ENCODE measurements at regions of chr13 and their contacts with region 1.

Region 1: GRCh38 chr13:40371531-40372125 is 294.8 kb downstream of the FOXO1 start:
- DNase-seq: no peak
- H3K4me3 Mint-ChIP-seq: peak overlapping the region; percentile 1
- H3K27ac Mint-ChIP-seq: peak overlapping the region; percentile 67
- H3K4me1 Mint-ChIP-seq: peaks cover 46% of the 10 kb centered on the region
- H3K27me3 Mint-ChIP-seq: no peaks in the 10 kb centered on the region

Region 2: GRCh38 chr13:40221460-40222201 is 150.0 kb before region 1 on chr13:
- intact Hi-C with region 1: loop called (anchors 2 kb)
- DNase-seq: no peak
- H3K4me3 Mint-ChIP-seq: peak overlapping the region; percentile 37
- H3K27ac Mint-ChIP-seq: peak overlapping the region; percentile 69
- H3K4me1 Mint-ChIP-seq: peaks cover 43% of the 10 kb centered on the region
- H3K27me3 Mint-ChIP-seq: no peaks in the 10 kb centered on the region

Region 3: DNA sequence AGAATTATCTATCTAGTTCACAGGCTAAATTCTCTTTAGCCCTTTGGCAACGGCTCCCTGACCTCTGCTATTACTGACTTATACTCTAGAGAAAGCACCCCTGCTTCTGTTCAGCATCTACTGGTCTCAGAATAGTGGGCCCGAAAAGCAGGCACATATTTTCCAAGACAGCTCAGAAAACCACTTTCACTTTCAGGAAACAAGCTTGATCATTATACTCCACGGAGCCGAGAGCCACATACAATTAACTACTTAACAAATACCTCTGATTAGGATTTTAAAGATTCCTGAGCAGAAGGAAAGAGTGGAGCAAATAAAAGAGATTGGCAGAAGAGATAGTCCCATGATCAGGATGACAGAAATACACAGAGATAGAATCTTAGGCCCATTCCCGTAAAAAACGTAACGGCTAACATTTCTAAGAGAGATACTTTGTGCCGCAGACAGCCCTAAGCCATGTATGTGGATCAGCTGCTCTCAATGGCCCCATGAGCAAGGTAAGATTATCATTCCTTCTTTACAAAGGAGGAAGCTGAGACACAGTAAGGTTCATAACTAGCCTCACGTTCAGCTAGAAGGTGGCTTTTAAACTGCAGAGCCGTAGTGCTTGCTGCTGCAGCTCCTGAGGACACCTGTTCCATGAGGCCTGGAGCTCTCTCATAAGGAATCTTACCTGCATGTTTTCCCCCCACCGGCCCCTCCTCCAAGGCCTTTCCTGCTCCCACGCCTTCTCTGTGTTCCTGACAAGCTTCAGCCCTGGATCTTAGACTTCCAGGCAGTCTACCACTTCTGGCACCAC is 67.6 kb after region 1 on chr13:
- intact Hi-C with region 1: loop called (anchors 5 kb)
- DNase-seq: no peak
- H3K4me3 Mint-ChIP-seq: peak overlapping the region; percentile 23
- H3K27ac Mint-ChIP-seq: peak overlapping the region; percentile 73
- H3K4me1 Mint-ChIP-seq: peaks cover 33% of the 10 kb centered on the region
- H3K27me3 Mint-ChIP-seq: peaks cover 2% of the 10 kb centered on the region

Region 4: DNA sequence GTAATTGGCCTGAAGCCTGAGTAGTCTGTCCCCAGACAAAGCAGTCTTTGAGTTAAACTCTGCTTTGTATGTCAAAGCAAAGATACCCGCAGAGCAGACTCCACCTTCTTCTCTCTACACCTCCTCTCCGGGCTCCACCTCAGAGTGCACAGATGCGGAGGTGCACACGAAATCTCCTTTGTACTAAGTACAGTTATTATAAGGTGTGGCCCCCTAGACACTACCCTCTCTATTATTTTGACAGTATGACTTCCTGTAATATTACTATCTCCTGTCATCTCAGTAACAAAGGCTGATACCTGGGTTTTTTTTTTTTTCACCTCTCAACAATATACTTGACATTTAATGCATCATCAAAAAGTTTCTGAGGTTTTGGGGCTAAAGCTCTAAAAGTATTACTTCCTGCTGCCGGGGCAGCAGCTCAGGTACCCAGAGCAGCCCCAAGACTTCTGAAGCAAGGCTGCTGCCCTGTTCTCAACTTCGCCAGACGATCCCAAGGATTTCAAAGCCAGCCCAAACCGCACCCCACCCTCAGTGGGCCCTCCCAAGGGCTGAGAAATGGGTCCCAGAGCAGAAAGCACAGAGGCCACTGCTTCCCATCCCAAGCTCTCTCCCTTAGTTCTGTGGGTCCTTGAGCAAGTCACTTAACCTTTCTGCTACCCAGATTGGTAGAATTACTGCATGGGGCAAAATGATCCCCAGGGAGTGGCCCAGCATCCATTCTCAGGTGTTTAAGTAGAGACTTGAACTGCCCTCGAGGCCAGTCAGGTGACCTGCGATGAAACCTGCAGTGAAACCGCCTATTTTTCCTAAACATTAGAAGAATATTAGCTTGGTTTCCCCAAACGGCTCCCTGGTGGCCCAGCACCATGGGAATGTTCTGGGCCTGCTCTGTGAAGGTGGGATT is 114.2 kb after region 1 on chr13:
- intact Hi-C with region 1: loop called (anchors 5 kb)
- DNase-seq: peak; percentile 50
- H3K4me3 Mint-ChIP-seq: peak overlapping the region; percentile 23
- H3K27ac Mint-ChIP-seq: peak overlapping the region; percentile 89
- H3K4me1 Mint-ChIP-seq: peaks cover 68% of the 10 kb centered on the region
- H3K27me3 Mint-ChIP-seq: no peaks in the 10 kb centered on the region